Activated CD8-positive, alpha-beta memory T cell treated with anti-CD3 and anti-CD28 coated beads, Interleukin-2, amount 10 ng/mL, durations not matched to agents 7 days and 5 days (primary cell): ENCODE measurements at regions of chr17 and their contacts with region 1.

Region 1: GRCh38 chr17:2336215-2336851 is at the start of gene TSR1:
- DNase-seq: peak; percentile 94
- ATAC-seq: peak; percentile 91
- H3K4me3 Mint-ChIP-seq: peak within 1 kb of the TSS; percentile 100
- H3K27ac Mint-ChIP-seq: peak within 1 kb of the TSS; percentile 93
- H3K4me1 Mint-ChIP-seq: peaks cover 21% of the 10 kb centered on the region
- H3K27me3 Mint-ChIP-seq: no peaks in the 10 kb centered on the region
- total RNA-seq, gene TSR1: 33.2 to 45.7 TPM

Region 2: DNA sequence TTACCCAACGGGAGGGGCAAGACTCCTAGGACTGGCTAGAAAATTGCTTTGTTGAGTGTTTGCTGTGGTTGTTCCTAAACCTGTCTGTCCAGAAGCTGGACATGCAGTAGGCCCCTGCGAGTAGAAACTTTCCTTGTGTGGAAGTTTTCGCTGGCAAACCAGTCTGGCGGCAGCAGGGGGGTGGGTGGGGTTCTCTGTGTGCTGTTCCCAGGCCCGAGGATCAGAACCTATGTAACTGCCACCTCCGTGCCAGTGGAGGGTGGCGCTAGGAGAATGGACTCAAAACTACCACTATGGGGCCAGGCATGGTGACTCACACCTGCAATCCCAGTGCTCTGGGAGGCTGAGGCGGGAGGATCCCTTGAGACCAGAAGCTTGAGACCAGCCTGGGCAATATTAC is 10.2 kb after region 1 on chr17:
- CTCF ChIA-PET with region 1: interaction called, 64 read pairs
- DNase-seq: no peak
- ATAC-seq: no peak
- H3K4me3 Mint-ChIP-seq: no peak overlapping the region
- H3K27ac Mint-ChIP-seq: no peak overlapping the region
- H3K4me1 Mint-ChIP-seq: peaks cover 11% of the 10 kb centered on the region
- H3K27me3 Mint-ChIP-seq: no peaks in the 10 kb centered on the region